ENCODE measurements at regions of chr2 and their contacts with region 1.

Region 1: GRCh38 chr2:105294844-105295481 is 34.6 kb downstream of the TGFBRAP1 start:
- DNase-seq: no peak
- ATAC-seq: peak; percentile 82
- H3K4me3 ChIP-seq: no peak overlapping the region
- H3K27ac ChIP-seq: no peak overlapping the region
- H3K4me1 ChIP-seq: no peaks in the 10 kb centered on the region
- H3K27me3 ChIP-seq: no peaks in the 10 kb centered on the region
- CTCF ChIP-seq: peak; percentile 42 to 51 (median 47)
- EP300 ChIP-seq: no peak
- POLR2A ChIP-seq: no peak
- RAD21 ChIP-seq: peak; percentile 54

Region 2: GRCh38 chr2:105309147-105309545 is 14.2 kb after region 1 on chr2:
- CTCF ChIA-PET with region 1: interaction called, 15 read pairs
- POLR2A ChIA-PET with region 1: no interaction called
- RAD21 ChIA-PET with region 1: no interaction called
- SMC1A ChIA-PET with region 1: interaction called, 4 read pairs
- in situ Hi-C with region 1: no loop called
- intact Hi-C with region 1: no loop called
- DNase-seq: no peak
- ATAC-seq: no peak
- H3K4me3 ChIP-seq: no peak overlapping the region
- H3K27ac ChIP-seq: no peak overlapping the region
- H3K4me1 ChIP-seq: peaks cover 5% of the 10 kb centered on the region
- H3K27me3 ChIP-seq: no peaks in the 10 kb centered on the region
- CTCF ChIP-seq: no peak
- EP300 ChIP-seq: no peak
- POLR2A ChIP-seq: no peak
- RAD21 ChIP-seq: no peak

Region 3: DNA sequence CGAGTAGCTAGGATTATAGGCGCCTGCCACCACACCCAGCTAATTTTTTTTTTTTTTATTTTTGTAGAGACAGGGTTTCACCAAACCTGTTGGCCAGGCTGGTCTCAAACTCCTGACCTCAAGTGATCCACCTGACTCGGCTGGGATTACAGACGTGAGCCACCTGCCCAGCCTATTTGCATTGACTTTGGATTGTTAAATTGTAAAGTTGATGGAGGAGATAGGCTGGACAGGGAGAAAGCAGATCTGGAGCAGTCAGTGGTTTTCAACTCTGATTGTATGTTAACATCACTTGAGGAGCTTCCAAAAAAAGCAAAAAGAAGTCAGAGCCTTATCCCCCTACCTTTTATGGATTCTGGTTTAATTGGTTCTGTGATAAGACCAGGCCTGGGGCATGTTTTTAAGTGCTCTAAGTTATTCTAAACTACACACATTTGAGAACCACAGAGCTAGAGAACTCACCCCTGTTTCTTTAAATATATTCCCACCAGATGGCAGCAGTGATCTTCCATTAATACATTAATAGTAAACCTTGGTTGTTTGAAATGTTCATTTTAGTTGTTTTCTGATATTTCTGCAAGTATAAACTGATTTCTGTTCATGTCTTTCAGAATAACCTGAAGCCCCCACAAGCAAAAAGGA is 49.9 kb after region 1 on chr2:
- CTCF ChIA-PET with region 1: no interaction called
- POLR2A ChIA-PET with region 1: no interaction called
- RAD21 ChIA-PET with region 1: no interaction called
- SMC1A ChIA-PET with region 1: no interaction called
- in situ Hi-C with region 1: no loop called
- intact Hi-C with region 1: loop called (anchors 5 kb)
- DNase-seq: no peak
- ATAC-seq: peak; percentile 66
- H3K4me3 ChIP-seq: no peak overlapping the region
- H3K27ac ChIP-seq: no peak overlapping the region
- H3K4me1 ChIP-seq: no peaks in the 10 kb centered on the region
- H3K27me3 ChIP-seq: no peaks in the 10 kb centered on the region
- CTCF ChIP-seq: peak in 2 of 3 experiments; percentile 33 to 37; a peak in 2 of 6 replicates
- EP300 ChIP-seq: no peak
- POLR2A ChIP-seq: no peak
- RAD21 ChIP-seq: 0 out of 2 replicates have a peak, but pooled peaks have one; percentile 3

Region 4: DNA sequence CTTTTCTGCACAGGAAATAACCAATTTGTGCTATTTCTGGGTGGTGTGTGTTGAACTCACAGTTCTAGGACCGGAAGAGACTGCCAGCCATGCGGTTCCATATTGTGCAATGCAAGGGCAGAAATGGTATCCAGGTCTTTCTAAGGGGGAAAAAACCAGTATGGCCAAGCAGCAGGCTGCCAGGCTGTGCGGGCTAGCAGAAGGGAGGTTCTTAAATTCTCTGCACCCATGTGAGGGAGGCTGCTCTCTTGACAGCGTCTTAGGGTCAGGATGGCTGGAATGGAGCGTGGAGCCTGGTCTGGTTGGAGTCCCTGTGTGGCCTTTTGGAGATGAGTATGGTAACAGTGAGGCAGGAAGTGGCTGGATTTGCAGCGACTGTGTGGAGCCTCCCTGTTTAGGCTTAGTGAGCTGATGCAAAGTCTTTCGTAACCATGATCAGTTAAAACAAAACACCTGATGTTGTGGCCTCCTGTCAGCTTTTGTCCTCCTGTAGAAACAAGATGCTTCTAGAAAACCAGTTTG is 502.4 kb after region 1 on chr2:
- CTCF ChIA-PET with region 1: no interaction called
- POLR2A ChIA-PET with region 1: no interaction called
- RAD21 ChIA-PET with region 1: no interaction called
- SMC1A ChIA-PET with region 1: no interaction called
- in situ Hi-C with region 1: no loop called
- intact Hi-C with region 1: no loop called
- DNase-seq: peak; percentile 65
- ATAC-seq: peak; percentile 66
- H3K4me3 ChIP-seq: peak overlapping the region; percentile 31; the same call in 1 of the 2 replicates
- H3K27ac ChIP-seq: peak overlapping the region; percentile 96
- H3K4me1 ChIP-seq: peaks cover 66% of the 10 kb centered on the region
- H3K27me3 ChIP-seq: no peaks in the 10 kb centered on the region
- CTCF ChIP-seq: no peak
- EP300 ChIP-seq: no peak; a peak in 1 of 4 replicates
- POLR2A ChIP-seq: peak; percentile 63; the same call in 1 of the 2 replicates
- RAD21 ChIP-seq: no peak

Measured in GM12878 (cell line).